GM23248 (cell line): ENCODE measurements at regions of chr16 and their contacts with region 1.

Region 1: GRCh38 chr16:68590201-68590994 is 51.3 kb downstream of the ZFP90 start:
- DNase-seq: peak; percentile 82
- H3K4me3 ChIP-seq: no peak overlapping the region
- H3K27ac ChIP-seq: no peak overlapping the region
- H3K4me1 ChIP-seq: no peaks in the 10 kb centered on the region
- H3K27me3 ChIP-seq: no peaks in the 10 kb centered on the region

Region 2: GRCh38 chr16:68146585-68146984 is 443.8 kb before region 1 on chr16:
- in situ Hi-C with region 1: no loop called
- DNase-seq: peak; percentile 42
- H3K4me3 ChIP-seq: no peak overlapping the region
- H3K27ac ChIP-seq: no peak overlapping the region
- H3K4me1 ChIP-seq: peaks cover 13% of the 10 kb centered on the region
- H3K27me3 ChIP-seq: no peaks in the 10 kb centered on the region

Region 3: DNA sequence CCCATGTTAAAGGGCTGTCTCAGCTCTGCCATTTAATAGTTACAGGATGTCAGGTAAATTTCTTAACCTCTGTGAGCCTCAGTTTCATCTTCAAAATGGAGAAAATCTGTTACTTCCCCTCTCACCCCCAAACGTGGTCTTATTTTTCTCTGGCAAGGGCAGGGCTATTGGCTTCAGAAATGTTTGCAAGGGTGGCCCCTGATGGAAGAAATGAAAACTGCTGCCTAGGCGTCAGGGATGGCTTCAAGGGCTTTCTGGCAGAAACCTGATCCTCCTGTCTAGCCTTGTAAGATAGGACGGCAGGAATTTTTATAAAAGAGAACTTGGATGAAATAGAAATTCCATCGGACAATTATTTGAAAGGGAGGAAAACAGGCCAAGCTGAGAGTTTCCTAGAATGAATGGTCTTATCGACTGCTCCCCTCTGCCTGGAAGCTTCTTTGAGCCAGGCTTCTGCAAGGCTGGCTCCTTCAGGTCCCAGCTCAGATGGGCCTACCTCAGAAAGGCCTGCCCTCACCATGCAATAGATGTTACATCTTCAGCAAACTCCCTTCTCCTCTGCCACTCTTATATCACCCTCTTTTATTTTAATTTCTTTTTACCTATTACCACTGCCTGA is 210.0 kb after region 1 on chr16:
- in situ Hi-C with region 1: loop called (anchors 10 kb)
- DNase-seq: peak; percentile 79
- H3K4me3 ChIP-seq: no peak overlapping the region
- H3K27ac ChIP-seq: no peak overlapping the region
- H3K4me1 ChIP-seq: no peaks in the 10 kb centered on the region
- H3K27me3 ChIP-seq: no peaks in the 10 kb centered on the region; the same call in 1 of the 2 replicates